ENCODE measurements at regions of chr13 and their contacts with region 1.

Region 1: GRCh38 chr13:23466144-23467002 is 32.9 kb upstream of the SACS start:
- DNase-seq: peak; percentile 40
- H3K4me3 Mint-ChIP-seq: peak overlapping the region; percentile 68
- H3K27ac Mint-ChIP-seq: peak overlapping the region; percentile 21
- H3K4me1 Mint-ChIP-seq: peaks cover 5% of the 10 kb centered on the region
- H3K27me3 Mint-ChIP-seq: peaks cover 22% of the 10 kb centered on the region

Region 2: DNA sequence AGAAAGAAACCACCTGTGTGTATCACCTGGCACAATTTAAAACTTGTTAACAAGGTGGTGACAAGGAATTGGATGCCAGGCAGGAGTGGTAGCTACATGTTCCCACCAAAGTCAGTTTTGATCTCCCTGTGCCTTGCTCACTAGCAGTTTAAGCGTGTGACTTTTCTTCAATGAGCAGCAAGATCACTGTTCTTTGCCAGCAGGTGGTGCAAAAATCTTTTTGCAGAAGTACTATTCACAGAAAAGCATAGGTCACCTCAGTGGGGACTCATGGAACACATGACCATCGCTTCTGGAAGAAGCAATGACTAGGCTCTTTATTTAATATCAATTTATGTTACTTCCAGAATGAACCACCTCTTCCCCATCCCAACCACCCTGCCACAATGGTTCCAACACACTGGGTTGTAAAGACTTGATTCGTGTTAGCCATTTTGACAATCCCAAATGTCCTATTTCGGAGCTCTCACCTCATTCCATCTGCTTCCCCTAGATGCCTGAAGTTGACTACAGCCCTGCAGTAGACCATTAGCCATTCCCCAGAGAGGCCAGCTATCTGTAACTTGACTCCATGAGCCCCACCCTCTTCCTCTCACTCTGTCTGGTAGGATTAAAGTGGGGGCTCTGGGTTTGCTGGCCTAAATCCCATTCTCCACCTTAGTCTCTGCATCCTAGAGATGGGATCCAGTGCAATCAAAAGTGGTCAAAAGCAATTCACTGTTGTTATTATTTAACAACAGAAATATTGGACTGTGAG is 44.8 kb after region 1 on chr13:
- intact Hi-C with region 1: no loop called
- DNase-seq: no peak
- H3K4me3 Mint-ChIP-seq: no peak overlapping the region
- H3K27ac Mint-ChIP-seq: no peak overlapping the region
- H3K4me1 Mint-ChIP-seq: no peaks in the 10 kb centered on the region
- H3K27me3 Mint-ChIP-seq: peaks cover 8% of the 10 kb centered on the region

Region 3: GRCh38 chr13:23715762-23716235 is 249.4 kb after region 1 on chr13:
- intact Hi-C with region 1: loop called (anchors 10 kb)
- DNase-seq: no peak
- H3K4me3 Mint-ChIP-seq: no peak overlapping the region
- H3K27ac Mint-ChIP-seq: no peak overlapping the region
- H3K4me1 Mint-ChIP-seq: no peaks in the 10 kb centered on the region
- H3K27me3 Mint-ChIP-seq: peaks cover 16% of the 10 kb centered on the region

Region 4: DNA sequence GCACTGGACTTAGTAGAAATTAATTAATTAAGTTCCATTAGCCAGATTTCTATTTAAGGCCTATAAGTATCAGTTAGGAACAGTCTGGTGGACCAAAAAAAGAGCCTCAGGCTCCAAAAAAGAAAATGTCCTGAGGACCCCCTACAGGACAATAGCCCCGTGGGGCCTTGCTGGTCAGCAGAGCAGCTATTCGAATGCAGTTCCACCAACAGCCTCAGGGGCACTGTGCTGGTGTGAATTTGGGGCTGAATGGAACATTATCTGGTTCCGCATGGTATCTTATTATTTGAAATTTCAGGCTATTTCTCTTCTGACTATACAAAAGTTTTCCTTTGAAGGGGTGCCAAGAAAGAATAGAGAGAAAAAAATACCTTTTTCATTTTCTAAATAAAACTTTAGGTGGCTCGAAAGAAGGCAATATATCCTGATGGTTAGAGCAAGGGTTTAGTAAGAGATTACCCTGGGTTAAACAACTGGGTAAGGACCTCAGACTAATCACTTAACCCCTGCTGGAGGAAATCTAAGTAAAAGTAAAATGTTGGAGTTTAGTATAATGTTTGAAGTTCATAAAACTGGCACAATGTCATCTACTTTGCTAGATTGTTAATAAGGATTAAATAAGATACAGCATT is 275.6 kb after region 1 on chr13:
- intact Hi-C with region 1: loop called (anchors 5 kb)
- DNase-seq: no peak
- H3K4me3 Mint-ChIP-seq: no peak overlapping the region
- H3K27ac Mint-ChIP-seq: no peak overlapping the region
- H3K4me1 Mint-ChIP-seq: peaks cover 27% of the 10 kb centered on the region
- H3K27me3 Mint-ChIP-seq: peaks cover 10% of the 10 kb centered on the region

Region 5: GRCh38 chr13:23888658-23889614 is 422.6 kb after region 1 on chr13 and contains the start of gene MIPEP:
- intact Hi-C with region 1: loop called (anchors 1 kb)
- DNase-seq: peak; percentile 86
- H3K4me3 Mint-ChIP-seq: peak within 1 kb of the TSS; percentile 89
- H3K27ac Mint-ChIP-seq: peak within 1 kb of the TSS; percentile 90
- H3K4me1 Mint-ChIP-seq: peaks cover 31% of the 10 kb centered on the region
- H3K27me3 Mint-ChIP-seq: no peaks in the 10 kb centered on the region
- total RNA-seq, gene MIPEP: 7.3 and 7.8 TPM in 2 replicates

Region 6: DNA sequence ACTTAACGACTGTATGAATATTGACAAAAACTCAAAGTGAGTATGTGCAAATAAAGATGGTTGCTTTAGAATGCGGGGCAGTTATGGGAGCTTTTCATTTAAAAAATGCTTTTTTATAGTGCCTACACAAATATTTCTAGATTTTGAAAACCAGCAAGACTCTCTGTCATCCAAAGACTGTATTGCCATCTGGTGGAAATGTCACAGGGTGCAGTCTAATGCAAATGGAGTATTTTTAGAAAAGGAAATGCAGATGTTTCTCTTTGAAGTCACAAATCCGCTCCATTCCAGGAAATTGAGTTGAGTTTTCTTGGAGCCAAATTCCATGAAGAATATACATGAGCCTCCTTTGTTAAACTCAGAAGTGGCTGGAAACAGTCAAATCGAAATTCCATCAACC is 433.2 kb after region 1 on chr13:
- intact Hi-C with region 1: loop called (anchors 1 kb)
- DNase-seq: no peak
- H3K4me3 Mint-ChIP-seq: no peak overlapping the region
- H3K27ac Mint-ChIP-seq: no peak overlapping the region
- H3K4me1 Mint-ChIP-seq: peaks cover 10% of the 10 kb centered on the region
- H3K27me3 Mint-ChIP-seq: peaks cover 34% of the 10 kb centered on the region

Measured in activated T-helper 1 cell treated with anti-CD3 and anti-CD28 coated beads, Interleukin-12 subunit alpha, Interleukin-12 subunit beta, Interleukin-2, Interleukin-4 antibody, amounts not matched to agents 30 ng/mL and 10 ng/mL and 1 ng/mL, durations not matched to agents 14 hours and 24 hours and 36 hours (primary cell).